Panc1 (cell line): ENCODE measurements at regions of chr15 and their contacts with region 1.

Region 1: DNA sequence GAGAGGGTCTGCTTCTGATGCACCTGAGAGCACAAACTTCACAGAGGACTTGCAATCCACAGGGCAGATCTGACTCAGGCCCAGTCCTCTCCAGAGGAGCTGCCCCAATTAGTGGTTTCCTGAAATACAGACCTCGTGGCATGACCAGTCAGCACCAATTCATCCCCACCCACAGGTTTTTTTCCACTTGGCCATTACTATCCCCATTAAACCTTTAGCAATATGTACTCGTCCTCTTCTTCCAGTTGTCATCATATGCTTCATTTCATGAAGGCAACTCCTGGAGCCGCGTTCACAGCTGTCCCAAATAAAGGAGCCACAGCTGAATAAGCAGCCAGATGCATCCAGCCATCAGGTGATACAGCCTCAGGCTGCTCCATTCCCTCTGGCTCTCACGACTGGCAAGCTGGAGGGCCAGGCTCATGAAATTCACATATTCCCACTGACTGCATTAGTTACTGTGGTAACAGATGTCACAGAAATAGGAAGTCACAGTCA is 163.1 kb downstream of the FMN1 start:
- DNase-seq: no peak
- ATAC-seq: no peak
- H3K4me3 ChIP-seq: no peak overlapping the region
- H3K27ac ChIP-seq: no peak overlapping the region
- H3K4me1 ChIP-seq: no peaks in the 10 kb centered on the region
- H3K27me3 ChIP-seq: no peaks in the 10 kb centered on the region
- CTCF ChIP-seq: no peak

Region 2: DNA sequence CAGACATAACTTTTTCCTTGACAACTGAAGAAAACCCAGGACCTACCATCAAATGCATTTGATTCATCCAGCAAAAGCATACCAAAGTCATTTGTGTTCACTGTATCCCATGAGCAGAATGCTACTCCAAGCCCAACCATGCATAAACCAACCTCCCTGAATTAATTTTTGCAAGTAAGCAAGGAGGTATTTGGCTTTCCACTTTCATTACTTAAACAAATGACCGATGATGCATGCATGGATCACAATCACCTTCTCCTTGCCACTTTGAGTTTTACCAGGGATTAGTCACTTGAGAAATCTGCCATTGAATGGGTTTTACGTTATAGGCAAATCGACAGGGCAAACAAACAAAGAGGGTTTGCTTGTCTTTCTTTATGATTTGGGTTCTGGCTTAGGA is 51.7 kb before region 1 on chr15:
- CTCF ChIA-PET with region 1: no interaction called
- POLR2A ChIA-PET with region 1: no interaction called
- in situ Hi-C with region 1: no loop called
- intact Hi-C with region 1: loop called (anchors 10 kb)
- DNase-seq: no peak
- ATAC-seq: peak; percentile 63; the same call in 1 of the 2 replicates
- H3K4me3 ChIP-seq: no peak overlapping the region
- H3K27ac ChIP-seq: no peak overlapping the region
- H3K4me1 ChIP-seq: no peaks in the 10 kb centered on the region
- H3K27me3 ChIP-seq: no peaks in the 10 kb centered on the region
- CTCF ChIP-seq: no peak

Region 3: GRCh38 chr15:33007303-33007855 is 24.0 kb before region 1 on chr15:
- CTCF ChIA-PET with region 1: no interaction called
- POLR2A ChIA-PET with region 1: no interaction called
- in situ Hi-C with region 1: no loop called
- intact Hi-C with region 1: no loop called
- DNase-seq: no peak
- ATAC-seq: peak; percentile 53; the same call in 1 of the 2 replicates
- H3K4me3 ChIP-seq: no peak overlapping the region
- H3K27ac ChIP-seq: no peak overlapping the region
- H3K4me1 ChIP-seq: no peaks in the 10 kb centered on the region
- H3K27me3 ChIP-seq: no peaks in the 10 kb centered on the region
- CTCF ChIP-seq: peak; percentile 49